AG04449 (cell line): ENCODE measurements at regions of chr12 and their contacts with region 1.

Region 1: DNA sequence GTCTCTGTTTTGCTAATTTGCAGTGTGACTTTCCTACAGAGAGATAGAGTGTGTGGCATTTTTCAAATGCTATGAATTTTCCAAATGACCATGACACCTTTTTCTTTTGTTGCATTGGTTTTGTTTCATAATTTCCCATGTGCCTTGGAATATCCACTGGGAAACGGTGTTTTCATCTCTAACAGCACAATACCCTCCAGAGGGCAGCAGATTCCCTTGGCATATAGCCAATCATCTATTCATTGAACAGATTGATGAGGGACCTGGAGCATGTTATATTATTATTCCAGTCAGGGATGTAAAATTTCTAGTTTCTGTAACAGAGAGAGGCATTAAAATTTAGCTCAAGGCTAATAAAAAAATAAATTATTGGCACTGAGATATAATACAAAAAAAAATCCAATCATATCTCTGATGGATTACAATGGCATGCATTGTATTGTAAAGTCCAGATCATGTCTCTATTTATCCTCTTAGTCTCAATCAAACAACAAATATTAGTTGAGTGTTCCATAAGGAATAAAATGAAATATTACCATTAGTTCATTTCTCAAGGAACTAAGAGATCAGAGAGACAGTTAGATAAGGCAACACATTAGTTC is 29.6 kb upstream of the NTN4 start:
- DNase-seq: no peak
- H3K4me3 ChIP-seq: no peak overlapping the region
- CTCF ChIP-seq: peak; percentile 51

Region 2: GRCh38 chr12:95805864-95806671 is 14.1 kb before region 1 on chr12:
- CTCF ChIA-PET with region 1: interaction called, 11 read pairs
- POLR2A ChIA-PET with region 1: no interaction called
- DNase-seq: peak; percentile 99
- H3K4me3 ChIP-seq: no peak overlapping the region
- CTCF ChIP-seq: no peak